Activated CD4-positive, alpha-beta T cell treated with anti-CD3 and anti-CD28 coated beads, Interleukin-2, amount 10 ng/mL, durations not matched to agents 24 days and 14 days (primary cell): ENCODE measurements at regions of chr16 and their contacts with region 1.

Region 1: DNA sequence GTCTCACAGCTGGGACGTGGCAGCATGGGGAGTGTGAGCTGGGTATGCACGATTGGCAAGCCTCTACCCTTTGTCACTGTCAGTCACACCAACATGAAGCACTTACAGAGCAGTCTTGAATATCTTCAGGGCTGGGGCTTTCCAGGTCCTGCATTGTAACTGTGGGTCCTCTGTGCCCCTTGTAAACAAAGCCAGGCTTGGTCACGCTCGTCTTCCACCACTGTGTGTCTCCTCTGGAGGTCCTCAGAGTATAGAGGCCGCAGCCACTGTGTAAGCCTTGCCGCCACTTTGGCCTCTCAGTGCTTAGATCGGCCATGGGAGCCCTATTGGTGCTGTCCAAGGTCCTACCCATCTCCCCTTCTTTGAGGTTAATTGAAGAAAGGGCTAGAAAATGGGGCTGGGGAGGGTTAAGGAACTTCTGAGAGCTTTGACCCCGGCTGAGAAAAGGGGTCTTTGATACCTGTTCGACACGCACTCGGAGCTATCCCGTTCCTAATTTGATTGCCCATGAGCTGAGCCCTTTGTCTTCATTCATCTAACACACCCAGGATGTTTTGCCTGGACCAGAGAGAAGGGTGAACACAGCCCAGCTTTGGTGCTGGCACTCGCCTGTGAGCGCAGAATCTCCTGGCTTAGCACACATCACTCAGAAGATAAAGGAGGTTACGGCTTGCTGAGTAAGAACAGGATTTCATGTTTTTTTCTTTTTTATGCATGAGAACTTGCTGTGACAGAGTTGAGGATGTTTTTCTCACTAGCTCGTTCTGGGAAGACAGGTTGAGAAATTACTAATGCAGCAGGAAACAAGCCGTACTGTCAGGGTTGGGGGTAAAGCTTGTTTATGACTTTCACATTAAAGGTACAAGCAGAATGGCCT is 267.9 kb downstream of the CPPED1 start:
- DNase-seq: peak; percentile 89
- H3K4me3 Mint-ChIP-seq: peak overlapping the region; percentile 75
- H3K27ac Mint-ChIP-seq: peak overlapping the region; percentile 97
- H3K4me1 Mint-ChIP-seq: peaks cover 91% of the 10 kb centered on the region
- H3K27me3 Mint-ChIP-seq: no peaks in the 10 kb centered on the region

Region 2: GRCh38 chr16:11586856-11587642 is 948.7 kb before region 1 on chr16 and contains the start of gene LITAF:
- intact Hi-C with region 1: loop called (anchors 10 kb)
- DNase-seq: peak; percentile 87
- H3K4me3 Mint-ChIP-seq: peak within 1 kb of the TSS; percentile 90
- H3K27ac Mint-ChIP-seq: peak within 1 kb of the TSS; percentile 89
- H3K4me1 Mint-ChIP-seq: peaks cover 38% of the 10 kb centered on the region
- H3K27me3 Mint-ChIP-seq: peaks cover 3% of the 10 kb centered on the region
- total RNA-seq, gene LITAF: 163 and 170 TPM in 2 replicates

Region 3: DNA sequence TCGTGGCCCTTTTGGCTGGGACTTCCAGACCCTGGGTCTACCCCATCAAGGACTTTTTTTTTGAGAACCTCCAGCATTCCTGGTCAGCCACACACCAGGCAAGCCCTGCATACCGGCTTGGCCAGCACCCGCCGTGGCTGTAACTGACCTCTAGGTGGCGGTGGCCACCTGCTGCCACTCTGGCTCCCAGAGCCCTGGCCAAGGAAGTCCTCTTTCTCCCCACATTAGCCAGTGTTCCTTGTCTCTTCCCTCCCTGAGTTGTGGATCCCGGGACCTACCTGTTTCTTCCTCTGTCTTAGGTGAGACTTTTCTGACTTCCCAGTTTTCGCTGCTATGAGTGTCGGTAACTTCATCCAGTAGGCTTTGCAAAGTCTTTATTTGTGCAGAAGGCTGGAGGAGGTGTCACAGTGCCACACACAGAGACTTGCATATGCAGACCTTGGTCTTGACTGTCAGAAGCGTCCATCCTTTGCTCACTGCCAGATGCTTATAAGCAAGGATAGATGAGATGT is 80.4 kb before region 1 on chr16:
- intact Hi-C with region 1: loop called (anchors 1 kb)
- DNase-seq: peak; percentile 83
- H3K4me3 Mint-ChIP-seq: no peak overlapping the region
- H3K27ac Mint-ChIP-seq: no peak overlapping the region
- H3K4me1 Mint-ChIP-seq: peaks cover 21% of the 10 kb centered on the region
- H3K27me3 Mint-ChIP-seq: no peaks in the 10 kb centered on the region

Region 4: DNA sequence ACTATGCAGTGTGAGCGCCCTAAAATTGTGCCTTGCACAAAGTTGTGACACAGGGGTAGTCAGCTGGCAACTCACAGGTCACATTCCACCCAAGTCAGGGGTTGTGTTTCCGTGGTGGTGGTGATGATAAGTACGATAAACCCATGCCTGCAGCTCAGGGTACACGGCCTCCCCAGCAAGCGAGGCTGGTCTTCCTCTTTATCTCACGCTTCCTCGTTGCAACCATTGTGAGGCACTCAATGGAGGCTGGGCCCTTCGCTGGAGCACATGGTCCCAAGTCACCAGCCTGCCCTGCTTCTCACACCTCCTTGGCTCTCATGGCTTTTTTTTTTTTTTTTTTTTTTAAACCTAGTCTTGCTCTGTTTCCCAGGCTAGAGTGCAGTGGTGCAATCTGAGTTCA is 39.6 kb before region 1 on chr16:
- intact Hi-C with region 1: no loop called
- DNase-seq: no peak
- H3K4me3 Mint-ChIP-seq: no peak overlapping the region
- H3K27ac Mint-ChIP-seq: no peak overlapping the region
- H3K4me1 Mint-ChIP-seq: peaks cover 9% of the 10 kb centered on the region
- H3K27me3 Mint-ChIP-seq: no peaks in the 10 kb centered on the region

Region 5: GRCh38 chr16:12573730-12574383 is 38.1 kb after region 1 on chr16:
- intact Hi-C with region 1: loop called (anchors 5 kb)
- DNase-seq: peak; percentile 86
- H3K4me3 Mint-ChIP-seq: no peak overlapping the region
- H3K27ac Mint-ChIP-seq: no peak overlapping the region
- H3K4me1 Mint-ChIP-seq: peaks cover 11% of the 10 kb centered on the region
- H3K27me3 Mint-ChIP-seq: no peaks in the 10 kb centered on the region

Region 6: DNA sequence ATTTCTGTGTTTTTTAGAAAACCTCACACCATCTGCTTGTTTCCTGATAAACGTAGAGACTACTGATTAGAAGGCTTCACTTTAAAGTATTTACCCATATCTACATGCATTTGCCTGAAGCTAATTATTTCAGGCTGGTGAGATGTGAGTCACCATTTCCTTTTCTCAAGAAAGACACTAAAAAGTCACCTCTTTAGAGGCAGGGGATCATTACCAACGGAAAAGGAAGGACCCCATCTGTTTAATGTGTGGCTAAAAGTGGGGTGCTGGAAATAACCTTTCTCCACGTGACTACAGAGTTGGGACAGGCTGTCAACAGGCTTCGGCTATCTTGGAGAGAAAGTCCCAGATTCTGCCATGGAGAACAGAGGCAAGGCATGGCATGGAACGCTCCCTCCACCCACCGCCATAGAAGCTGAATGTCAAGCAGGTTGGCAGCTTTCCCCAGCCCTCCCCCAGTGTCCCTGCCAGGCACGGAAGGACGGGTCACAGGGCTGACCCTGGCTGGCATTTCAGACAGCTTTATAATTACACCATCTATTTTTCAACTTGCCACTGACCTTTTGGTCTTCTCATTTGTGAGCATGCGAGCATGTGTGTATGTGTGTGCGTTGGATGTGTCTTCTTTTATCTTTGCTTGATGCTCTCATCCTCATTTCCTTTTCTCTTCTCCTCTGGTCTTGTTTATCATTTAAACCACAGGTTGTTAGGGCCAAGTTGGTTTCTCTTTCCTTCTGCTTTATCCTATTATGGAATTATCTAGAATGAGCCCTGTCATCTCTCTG is 110.9 kb after region 1 on chr16:
- intact Hi-C with region 1: loop called (anchors 1 kb)
- DNase-seq: peak; percentile 82
- H3K4me3 Mint-ChIP-seq: peak overlapping the region; percentile 71
- H3K27ac Mint-ChIP-seq: peak overlapping the region; percentile 98
- H3K4me1 Mint-ChIP-seq: peaks cover 22% of the 10 kb centered on the region
- H3K27me3 Mint-ChIP-seq: peaks cover 5% of the 10 kb centered on the region

Region 7: DNA sequence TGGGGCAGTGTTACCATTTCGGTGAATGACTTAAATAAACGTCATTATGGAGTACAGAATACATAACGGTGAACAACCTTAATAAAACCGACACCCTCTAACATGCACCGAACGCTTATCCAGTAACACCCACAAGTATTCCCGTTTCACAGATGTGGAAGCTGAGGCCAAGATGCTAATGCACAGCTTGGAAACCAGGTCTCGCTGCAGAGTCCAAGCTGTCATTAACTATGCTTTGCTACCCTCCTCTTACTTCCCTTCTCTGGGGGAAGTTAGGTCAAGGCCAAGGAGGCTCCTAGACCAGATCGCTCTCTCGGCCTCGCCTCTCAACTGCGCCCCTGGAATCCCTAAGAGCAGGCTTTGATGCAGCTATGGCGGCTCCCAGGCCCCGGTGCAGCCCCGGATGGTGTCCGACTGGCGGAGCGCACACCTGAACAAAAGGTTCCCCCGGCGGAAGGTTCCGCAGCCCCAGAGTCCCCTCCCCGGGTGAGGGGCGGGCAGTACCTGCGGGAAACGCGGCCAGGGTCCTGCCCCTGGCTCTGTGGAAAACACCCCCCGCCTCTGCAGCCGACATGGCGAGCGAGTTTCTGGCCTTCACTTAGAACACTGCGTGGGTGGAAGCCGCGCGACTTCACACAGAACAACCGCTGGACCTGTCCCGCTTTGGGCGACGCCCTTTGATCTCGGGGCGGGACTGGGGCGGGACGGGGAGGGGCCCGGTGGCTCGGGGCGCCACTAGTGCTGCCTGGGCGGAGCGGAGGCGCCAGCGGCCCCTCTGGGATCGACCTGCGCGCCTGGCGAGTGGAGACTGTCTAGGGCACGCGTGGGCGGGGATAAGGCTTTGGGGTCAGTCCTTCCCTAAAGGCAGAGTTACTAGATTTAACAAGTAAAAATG is 267.7 kb after region 1 on chr16 and contains the start of gene CPPED1:
- intact Hi-C with region 1: loop called (anchors 1 kb)
- DNase-seq: peak; percentile 97
- H3K4me3 Mint-ChIP-seq: peak within 1 kb of the TSS; percentile 94
- H3K27ac Mint-ChIP-seq: peak within 1 kb of the TSS; percentile 94
- H3K4me1 Mint-ChIP-seq: peaks cover 33% of the 10 kb centered on the region
- H3K27me3 Mint-ChIP-seq: no peaks in the 10 kb centered on the region
- total RNA-seq, gene CPPED1: 4.4 and 5.1 TPM in 2 replicates